ENCODE measurements at regions of chr15 and their contacts with region 1.

Region 1: GRCh38 chr15:81000624-81001151 is at the start of gene TLNRD1:
- DNase-seq: peak; percentile 83
- ATAC-seq: peak; percentile 88
- H3K4me3 ChIP-seq: peak within 1 kb of the TSS; percentile 76 to 92 (median 88)
- H3K27ac ChIP-seq: peak within 1 kb of the TSS; percentile 84
- H3K4me1 ChIP-seq: peaks cover 40% of the 10 kb centered on the region
- H3K27me3 ChIP-seq: no peaks in the 10 kb centered on the region
- CTCF ChIP-seq: no peak
- EP300 ChIP-seq: no peak
- POLR2A ChIP-seq: peak; percentile 59 to 90; a peak in 3 of 4 replicates
- RAD21 ChIP-seq: no peak
- total RNA-seq, gene TLNRD1: 4.6 and 5.3 TPM in 2 replicates

Region 2: GRCh38 chr15:80989518-80990478 is 10.9 kb before region 1 on chr15 and contains the start of gene MESD:
- CTCF ChIA-PET with region 1: no interaction called
- POLR2A ChIA-PET with region 1: interaction called, 10 read pairs
- in situ Hi-C with region 1: no loop called
- intact Hi-C with region 1: no loop called
- DNase-seq: peak; percentile 88
- ATAC-seq: peak; percentile 98
- H3K4me3 ChIP-seq: peak within 1 kb of the TSS; percentile 86 to 99 (median 95)
- H3K27ac ChIP-seq: peak within 1 kb of the TSS; percentile 80
- H3K4me1 ChIP-seq: peaks cover 41% of the 10 kb centered on the region
- H3K27me3 ChIP-seq: no peaks in the 10 kb centered on the region; a peak in 1 of 5 replicates
- CTCF ChIP-seq: no peak
- EP300 ChIP-seq: no peak; a peak in 1 of 4 replicates
- POLR2A ChIP-seq: peak; percentile 96 to 99
- RAD21 ChIP-seq: peak; percentile 19; the same call in 1 of the 2 replicates
- total RNA-seq, gene MESD: 24.9 and 46.2 TPM in 2 replicates

Region 3: GRCh38 chr15:81189583-81190283 is 189.0 kb after region 1 on chr15:
- CTCF ChIA-PET with region 1: no interaction called
- POLR2A ChIA-PET with region 1: no interaction called
- in situ Hi-C with region 1: no loop called
- intact Hi-C with region 1: no loop called
- DNase-seq: no peak
- ATAC-seq: no peak
- H3K4me3 ChIP-seq: no peak overlapping the region
- H3K27ac ChIP-seq: no peak overlapping the region
- H3K4me1 ChIP-seq: no peaks in the 10 kb centered on the region
- H3K27me3 ChIP-seq: peaks cover 0 to 7% of the 10 kb centered on the region in 2 experiments; a peak in 1 of 5 replicates
- CTCF ChIP-seq: no peak
- EP300 ChIP-seq: no peak
- POLR2A ChIP-seq: no peak
- RAD21 ChIP-seq: no peak